ENCODE measurements at regions of chr12 and their contacts with region 1.

Region 1: DNA sequence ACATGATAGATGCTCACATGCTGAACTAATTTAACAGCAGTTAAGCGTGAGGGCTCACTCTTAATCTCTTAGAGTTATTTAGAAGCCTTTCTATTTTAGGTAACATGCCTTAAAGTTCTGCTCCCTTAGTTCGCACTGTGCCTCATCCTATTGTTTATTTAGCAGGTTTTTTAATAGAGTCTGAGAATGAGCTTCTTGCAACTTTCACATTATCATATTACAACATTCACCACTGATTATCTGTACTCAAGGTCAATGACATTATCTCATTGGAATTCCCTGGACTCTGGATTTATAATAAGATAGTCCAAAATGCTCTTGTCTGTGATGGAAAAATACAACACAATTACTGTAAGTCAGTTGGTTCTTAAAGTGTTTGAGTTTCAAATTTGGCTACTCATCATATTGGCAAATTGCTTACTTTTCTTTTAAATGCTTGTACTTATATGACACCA is 183.6 kb upstream of the SLC38A2 start:
- DNase-seq: peak; percentile 92
- H3K4me3 ChIP-seq: peak overlapping the region; percentile 40
- H3K27ac ChIP-seq: peak overlapping the region; percentile 90
- H3K27me3 ChIP-seq: no peaks in the 10 kb centered on the region
- CTCF ChIP-seq: no peak

Region 2: GRCh38 chr12:46372544-46373110 is 183.5 kb before region 1 on chr12 and contains the start of gene SLC38A2:
- CTCF ChIA-PET with region 1: no interaction called
- POLR2A ChIA-PET with region 1: interaction called, 17 read pairs
- DNase-seq: no peak
- H3K4me3 ChIP-seq: peak within 1 kb of the TSS; percentile 95
- H3K27ac ChIP-seq: peak within 1 kb of the TSS; percentile 98
- H3K27me3 ChIP-seq: no peaks in the 10 kb centered on the region
- CTCF ChIP-seq: no peak
- polyA plus RNA-seq, gene SLC38A2: 520 and 749 TPM in 2 replicates

Region 3: GRCh38 chr12:46382964-46383653 is 173.0 kb before region 1 on chr12:
- CTCF ChIA-PET with region 1: no interaction called
- POLR2A ChIA-PET with region 1: interaction called, 15 read pairs
- DNase-seq: peak; percentile 94
- H3K4me3 ChIP-seq: peak overlapping the region; percentile 75
- H3K27ac ChIP-seq: peak overlapping the region; percentile 100
- H3K27me3 ChIP-seq: no peaks in the 10 kb centered on the region
- CTCF ChIP-seq: peak; percentile 18

Region 4: DNA sequence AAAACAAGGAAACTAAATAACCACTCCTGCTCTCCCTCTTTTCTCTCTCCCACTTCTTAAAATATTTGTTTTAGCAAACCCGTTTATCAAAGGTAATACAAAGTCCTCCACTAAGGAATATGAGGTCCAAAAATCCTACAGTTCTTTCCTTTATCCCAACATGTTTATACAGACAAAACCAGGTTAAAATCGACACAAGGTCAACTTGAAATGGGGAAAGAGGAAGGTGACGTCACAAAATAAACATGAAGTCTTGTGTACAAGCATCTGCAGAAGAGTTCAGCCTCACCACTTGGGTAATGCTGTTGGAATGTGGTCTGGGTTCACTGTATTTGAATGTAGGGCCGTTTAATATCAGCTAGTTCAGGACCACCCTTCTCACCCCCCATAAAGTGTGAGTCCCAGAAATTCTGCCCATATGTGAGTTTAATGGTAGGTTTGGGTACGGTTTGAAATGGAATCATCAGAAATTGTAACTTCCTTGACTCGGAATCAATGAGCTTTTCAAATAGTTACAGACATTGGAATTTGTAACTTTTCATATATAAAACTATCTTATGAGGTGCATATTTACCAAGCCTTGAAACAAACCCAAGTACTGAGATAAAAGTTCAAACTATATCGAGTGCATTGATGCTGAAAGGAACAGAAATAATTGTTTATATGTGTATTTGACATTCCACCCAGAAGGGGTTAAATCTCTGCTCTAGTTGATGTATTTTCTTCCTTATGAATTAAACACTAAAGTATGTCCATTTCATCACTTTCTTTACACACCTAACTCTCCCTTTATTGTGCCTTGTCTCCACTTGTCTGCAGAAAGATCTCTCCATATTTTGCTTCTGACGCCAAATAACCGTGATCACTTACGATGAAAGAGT is 63.4 kb before region 1 on chr12:
- CTCF ChIA-PET with region 1: no interaction called
- POLR2A ChIA-PET with region 1: interaction called, 10 read pairs
- DNase-seq: peak; percentile 85
- H3K4me3 ChIP-seq: no peak overlapping the region
- H3K27ac ChIP-seq: peak overlapping the region; percentile 68
- H3K27me3 ChIP-seq: no peaks in the 10 kb centered on the region
- CTCF ChIP-seq: no peak

Region 5: DNA sequence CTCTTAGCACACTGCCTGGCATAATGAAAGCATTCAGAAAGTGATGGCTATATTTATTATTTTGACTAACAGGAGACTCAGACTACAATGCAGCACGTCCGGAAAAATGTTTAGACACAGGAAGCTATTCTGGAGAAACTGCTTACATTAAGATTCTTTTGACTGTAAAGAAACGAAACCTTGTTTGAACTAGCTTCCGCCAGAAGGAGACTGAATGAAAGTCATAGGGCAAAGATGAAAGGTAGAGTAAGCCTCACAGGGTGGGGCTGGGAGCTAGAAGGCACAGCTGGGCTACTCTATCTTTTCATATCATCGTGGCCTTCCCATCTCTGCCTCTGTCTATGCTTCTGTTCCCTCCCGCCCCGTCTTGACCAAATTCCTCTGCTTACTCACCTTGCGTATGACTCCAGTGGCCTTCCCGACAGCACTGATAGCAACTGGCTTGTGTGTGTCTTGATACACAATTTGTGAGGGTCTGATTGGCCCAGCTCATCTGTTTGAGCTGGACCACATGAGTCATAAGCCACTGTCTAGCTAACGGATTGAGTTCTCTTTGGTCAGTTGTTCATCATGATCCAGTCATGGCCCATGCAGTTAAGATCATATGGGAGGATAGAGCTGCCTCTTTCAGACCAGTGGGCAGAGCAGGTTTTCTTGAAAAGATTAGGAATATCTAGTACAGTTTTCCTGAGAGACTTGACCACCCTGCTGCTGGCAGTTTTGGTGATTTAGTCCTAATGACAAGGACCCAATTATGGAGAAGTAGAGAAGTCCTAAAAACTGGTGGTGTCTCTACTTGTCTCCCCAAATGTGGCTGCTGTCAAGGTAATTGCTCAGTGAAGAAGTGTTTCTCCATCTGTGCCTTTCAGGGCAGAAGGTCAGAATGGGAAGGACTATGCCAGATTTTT is 32.0 kb before region 1 on chr12:
- CTCF ChIA-PET with region 1: no interaction called
- POLR2A ChIA-PET with region 1: interaction called, 16 read pairs
- DNase-seq: peak; percentile 92
- H3K4me3 ChIP-seq: peak overlapping the region; percentile 54
- H3K27ac ChIP-seq: peak overlapping the region; percentile 97
- H3K27me3 ChIP-seq: no peaks in the 10 kb centered on the region
- CTCF ChIP-seq: no peak

Region 6: GRCh38 chr12:46573347-46573658 is 17.2 kb after region 1 on chr12:
- CTCF ChIA-PET with region 1: no interaction called
- POLR2A ChIA-PET with region 1: no interaction called
- DNase-seq: no peak
- H3K4me3 ChIP-seq: no peak overlapping the region
- H3K27ac ChIP-seq: no peak overlapping the region
- H3K27me3 ChIP-seq: no peaks in the 10 kb centered on the region
- CTCF ChIP-seq: no peak

Measured in AG04450 (cell line).